Sciatic nerve (tissue), 2 donors: ENCODE measurements at regions of chr10 and their contacts with region 1.

Region 1: GRCh38 chr10:68992636-68993440 is 4.2 kb downstream of the KIFBP start:
- DNase-seq: no peak
- ATAC-seq: peak; percentile 42

Region 2: GRCh38 chr10:69092959-69093850 is 100.4 kb after region 1 on chr10:
- intact Hi-C with region 1: loop called (anchors 10 kb)
- DNase-seq: peak; percentile 82
- ATAC-seq: peak; percentile 81

Region 3: GRCh38 chr10:69202332-69202731 is 209.5 kb after region 1 on chr10:
- intact Hi-C with region 1: no loop called
- DNase-seq: no peak
- ATAC-seq: no peak